Naive thymus-derived CD4-positive, alpha-beta T cell (primary cell): ENCODE measurements at regions of chr12 and their contacts with region 1.

Region 1: DNA sequence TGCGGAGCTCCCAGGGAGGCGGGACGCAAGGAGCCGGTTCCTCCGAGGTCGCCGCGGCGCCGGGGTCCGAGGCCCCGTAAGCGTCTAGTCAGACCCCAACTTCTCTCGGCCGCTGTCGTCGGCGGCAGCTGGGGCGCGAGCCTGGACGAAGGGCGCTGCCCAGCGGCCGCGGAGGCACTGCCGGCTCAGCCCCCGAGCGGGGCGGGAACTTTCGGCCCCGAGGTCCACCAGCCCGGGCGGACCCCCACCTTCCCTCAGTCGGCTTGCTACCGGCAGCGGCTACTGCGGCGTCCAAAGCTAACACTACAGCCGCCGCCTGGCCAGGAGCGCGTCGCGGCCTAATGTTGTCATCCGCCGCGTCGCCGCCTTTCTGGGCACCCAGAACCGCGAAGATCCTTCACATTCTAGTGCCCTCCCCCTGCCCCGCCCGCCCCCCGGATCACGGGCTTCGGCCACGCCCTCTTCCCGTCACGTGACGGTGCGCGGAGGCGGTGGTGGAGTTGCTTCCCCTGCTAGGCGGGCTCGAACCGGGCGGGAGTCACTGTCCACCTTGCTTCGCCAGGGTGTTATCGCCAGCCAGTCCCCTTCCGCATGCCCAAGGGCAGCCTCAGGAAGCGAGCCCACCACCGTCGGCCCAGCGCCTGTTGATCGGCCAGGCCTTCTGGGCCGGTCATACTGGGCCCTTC is at the start of gene OSBPL8:
- DNase-seq: peak; percentile 85 to 98 (median 91)
- ATAC-seq: peak; percentile 88
- H3K4me3 ChIP-seq: peak within 1 kb of the TSS; percentile 97
- H3K4me3 Mint-ChIP-seq: peak within 1 kb of the TSS; percentile 88 to 99 (median 96)
- H3K27ac ChIP-seq: peak within 1 kb of the TSS; percentile 96
- H3K27ac Mint-ChIP-seq: peak within 1 kb of the TSS; percentile 91 to 98 (median 98)
- H3K4me1 ChIP-seq: peaks cover 21 to 29% of the 10 kb centered on the region in 2 donors
- H3K4me1 Mint-ChIP-seq: peaks cover 20 to 45% (median 35%) of the 10 kb centered on the region in 7 donors
- H3K27me3 ChIP-seq: no peaks in the 10 kb centered on the region
- H3K27me3 Mint-ChIP-seq: no peaks in the 10 kb centered on the region
- total RNA-seq, gene OSBPL8: 113 to 146 (median 119) TPM

Region 2: DNA sequence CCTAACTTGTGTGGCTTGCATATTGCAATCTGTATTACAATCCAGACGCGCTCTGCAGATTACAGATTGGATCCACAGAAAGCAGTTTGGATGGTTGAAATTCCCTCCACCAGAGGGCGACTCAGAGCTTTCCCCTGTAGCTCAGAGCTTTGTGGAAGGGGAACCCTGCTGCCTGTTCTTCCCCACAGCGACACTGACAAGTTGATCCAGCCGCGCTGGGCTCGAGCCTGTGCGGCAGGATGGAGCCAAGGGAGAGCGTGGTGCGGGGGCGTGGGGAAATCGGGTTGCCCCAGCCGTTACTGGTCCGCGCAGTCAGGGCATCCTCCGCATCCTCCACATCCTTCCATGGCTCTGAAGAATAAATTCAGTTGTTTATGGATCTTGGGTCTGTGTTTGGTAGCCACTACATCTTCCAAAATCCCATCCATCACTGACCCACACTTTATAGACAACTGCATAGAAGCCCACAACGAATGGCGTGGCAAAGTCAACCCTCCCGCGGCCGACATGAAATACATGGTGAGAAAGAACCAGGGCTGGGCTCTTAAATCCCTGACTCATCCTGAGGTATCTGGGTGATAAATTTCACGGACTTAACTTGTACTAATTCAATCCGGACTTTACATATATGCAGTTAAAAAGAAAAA is 1225.0 kb before region 1 on chr12 and contains the start of gene GLIPR1L1:
- CTCF ChIA-PET with region 1: no interaction called
- POLR2A ChIA-PET with region 1: no interaction called
- intact Hi-C with region 1: loop called in 1 of 2 experiments (anchors 10 kb)
- DNase-seq: peak; percentile 58 to 79 (median 74)
- ATAC-seq: peak; percentile 91
- H3K4me3 ChIP-seq: no peak within 1 kb of the TSS
- H3K4me3 Mint-ChIP-seq: peak within 1 kb of the TSS; percentile 18 to 80 (median 74)
- H3K27ac ChIP-seq: no peak within 1 kb of the TSS
- H3K27ac Mint-ChIP-seq: peak within 1 kb of the TSS in 1 of 9 donors; percentile 3
- H3K4me1 ChIP-seq: peaks cover 0 to 5% of the 10 kb centered on the region in 2 donors
- H3K4me1 Mint-ChIP-seq: peaks cover 11 to 29% (median 18%) of the 10 kb centered on the region in 7 donors
- H3K27me3 ChIP-seq: peaks cover 0 to 6% of the 10 kb centered on the region in 2 donors
- H3K27me3 Mint-ChIP-seq: peaks cover 16 to 56% (median 31%) of the 10 kb centered on the region in 5 donors
- total RNA-seq, gene GLIPR1L1: not detected

Region 3: GRCh38 chr12:75933101-75933500 is 626.4 kb before region 1 on chr12:
- CTCF ChIA-PET with region 1: no interaction called
- POLR2A ChIA-PET with region 1: no interaction called
- intact Hi-C with region 1: loop called in 1 of 2 experiments (anchors 5 kb)
- DNase-seq: no peak
- ATAC-seq: no peak
- H3K4me3 ChIP-seq: no peak overlapping the region
- H3K4me3 Mint-ChIP-seq: no peak overlapping the region
- H3K27ac ChIP-seq: no peak overlapping the region
- H3K27ac Mint-ChIP-seq: no peak overlapping the region
- H3K4me1 ChIP-seq: peaks cover 0 to 14% of the 10 kb centered on the region in 2 donors
- H3K4me1 Mint-ChIP-seq: peaks cover 0 to 26% (median 9%) of the 10 kb centered on the region in 7 donors
- H3K27me3 ChIP-seq: no peaks in the 10 kb centered on the region
- H3K27me3 Mint-ChIP-seq: peaks cover 0 to 16% (median 2%) of the 10 kb centered on the region in 5 donors

Region 4: GRCh38 chr12:76348079-76348901 is 211.3 kb before region 1 on chr12 and contains the start of gene BBS10:
- CTCF ChIA-PET with region 1: no interaction called
- POLR2A ChIA-PET with region 1: interaction called, 9 read pairs
- intact Hi-C with region 1: loop called (anchors 1 kb)
- DNase-seq: peak; percentile 64 to 86 (median 84)
- ATAC-seq: peak; percentile 97
- H3K4me3 ChIP-seq: peak within 1 kb of the TSS; percentile 88
- H3K4me3 Mint-ChIP-seq: peak within 1 kb of the TSS; percentile 89 to 98 (median 96)
- H3K27ac ChIP-seq: peak within 1 kb of the TSS; percentile 79
- H3K27ac Mint-ChIP-seq: peak within 1 kb of the TSS; percentile 85 to 95 (median 93)
- H3K4me1 ChIP-seq: peaks cover 16 to 20% of the 10 kb centered on the region in 2 donors
- H3K4me1 Mint-ChIP-seq: peaks cover 15 to 48% (median 30%) of the 10 kb centered on the region in 7 donors
- H3K27me3 ChIP-seq: no peaks in the 10 kb centered on the region
- H3K27me3 Mint-ChIP-seq: no peaks in the 10 kb centered on the region
- total RNA-seq, gene BBS10: 2.5 to 11.5 (median 5.2) TPM

Region 5: GRCh38 chr12:76519538-76519937 is 40.0 kb before region 1 on chr12:
- CTCF ChIA-PET with region 1: no interaction called
- POLR2A ChIA-PET with region 1: interaction called, 4 read pairs
- intact Hi-C with region 1: loop called in 1 of 2 experiments (anchors 5 kb)
- DNase-seq: peak in 1 of 9 donors; percentile 4
- ATAC-seq: peak; percentile 54
- H3K4me3 ChIP-seq: no peak overlapping the region
- H3K4me3 Mint-ChIP-seq: peak overlapping the region in 7 of 10 donors; percentile 2 to 43 (median 14)
- H3K27ac ChIP-seq: no peak overlapping the region
- H3K27ac Mint-ChIP-seq: peak overlapping the region in 5 of 9 donors; percentile 1 to 76 (median 40)
- H3K4me1 ChIP-seq: no peaks in the 10 kb centered on the region
- H3K4me1 Mint-ChIP-seq: peaks cover 36 to 87% (median 67%) of the 10 kb centered on the region in 7 donors
- H3K27me3 ChIP-seq: no peaks in the 10 kb centered on the region
- H3K27me3 Mint-ChIP-seq: no peaks in the 10 kb centered on the region

Region 6: DNA sequence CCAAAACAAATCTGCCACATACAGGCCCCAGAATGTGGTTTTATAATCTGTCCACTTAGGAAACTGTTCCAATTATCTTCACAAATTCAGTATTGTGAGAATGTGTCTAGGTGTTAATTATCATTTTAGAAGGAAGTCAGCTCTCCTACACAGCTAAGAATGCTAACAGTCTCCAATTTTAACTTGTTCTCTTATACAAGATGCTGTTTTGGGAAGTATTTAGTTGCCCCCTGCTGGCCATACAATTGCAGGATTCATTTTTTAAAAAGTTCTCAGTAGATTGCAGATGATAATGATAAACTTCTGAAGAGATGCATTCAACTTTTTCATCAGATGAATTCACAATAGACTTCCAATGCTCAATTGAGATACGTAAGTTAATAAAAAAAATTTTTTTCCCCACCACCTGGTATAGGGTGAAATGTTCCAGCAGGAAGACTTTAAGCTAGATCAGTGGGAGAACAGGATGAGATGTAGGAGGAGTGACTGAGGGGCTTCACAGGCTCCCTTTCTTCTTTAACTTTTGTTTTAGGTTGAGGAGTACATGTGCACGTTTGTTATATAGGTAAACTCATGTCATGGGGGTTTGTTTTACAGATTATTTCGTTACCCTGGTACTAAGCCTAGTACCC is 27.3 kb after region 1 on chr12:
- CTCF ChIA-PET with region 1: interaction called, 7 read pairs
- POLR2A ChIA-PET with region 1: interaction called, 7 read pairs
- intact Hi-C with region 1: loop called (anchors 1 kb)
- DNase-seq: peak in 7 of 9 donors; percentile 34 to 70 (median 59)
- ATAC-seq: peak; percentile 77
- H3K4me3 ChIP-seq: no peak overlapping the region
- H3K4me3 Mint-ChIP-seq: no peak overlapping the region
- H3K27ac ChIP-seq: no peak overlapping the region
- H3K27ac Mint-ChIP-seq: peak overlapping the region in 1 of 9 donors; percentile 73
- H3K4me1 ChIP-seq: no peaks in the 10 kb centered on the region
- H3K4me1 Mint-ChIP-seq: peaks cover 0 to 6% (median 0%) of the 10 kb centered on the region in 7 donors
- H3K27me3 ChIP-seq: no peaks in the 10 kb centered on the region
- H3K27me3 Mint-ChIP-seq: no peaks in the 10 kb centered on the region